ENCODE measurements at regions of chr2 and their contacts with region 1.

Region 1: GRCh38 chr2:207529330-207530159 is at the start of gene CREB1:
- DNase-seq: peak; percentile 99
- ATAC-seq: peak; percentile 89
- H3K4me3 ChIP-seq: peak within 1 kb of the TSS; percentile 83
- H3K27ac ChIP-seq: peak within 1 kb of the TSS; percentile 89
- H3K4me1 ChIP-seq: peaks cover 25% of the 10 kb centered on the region
- H3K27me3 ChIP-seq: no peaks in the 10 kb centered on the region
- CTCF ChIP-seq: no peak
- total RNA-seq, gene CREB1: 34.8 and 43.5 TPM in 2 replicates

Region 2: DNA sequence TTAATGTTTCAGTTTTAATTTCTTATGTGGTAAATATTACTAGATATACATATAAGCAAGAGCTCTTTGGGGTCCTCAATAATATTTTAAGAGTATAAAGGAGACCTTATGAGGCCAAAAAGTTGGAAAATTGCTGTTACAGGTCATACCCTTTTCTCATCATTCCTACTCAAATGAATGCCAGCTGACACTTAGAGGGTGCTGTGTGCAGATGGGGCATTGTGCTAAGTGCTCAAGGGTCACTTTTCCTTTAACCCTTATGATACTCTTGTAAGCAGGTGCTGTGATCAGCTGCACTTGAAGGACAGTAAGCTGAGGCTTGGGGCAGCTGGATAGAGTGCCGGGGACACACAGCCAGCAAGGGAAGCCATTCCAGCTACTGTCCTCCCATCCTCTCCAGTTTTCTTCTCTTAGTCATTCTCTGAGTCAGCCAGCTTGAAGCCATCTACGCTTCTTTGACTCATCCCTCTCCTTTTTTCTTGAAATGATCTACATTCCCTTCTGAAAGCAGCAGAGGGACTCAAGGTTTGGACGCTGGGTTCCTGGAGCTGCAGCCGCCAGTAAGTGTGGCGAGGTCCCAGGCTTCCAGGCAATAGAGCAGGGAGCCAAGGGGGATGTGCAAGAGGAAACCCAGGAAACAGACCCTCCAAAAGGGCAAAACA is 41.8 kb before region 1 on chr2:
- CTCF ChIA-PET with region 1: interaction called, 3 read pairs
- POLR2A ChIA-PET with region 1: interaction called, 3 read pairs
- intact Hi-C with region 1: loop called (anchors 2 kb)
- DNase-seq: peak; percentile 92
- ATAC-seq: peak; percentile 96
- H3K4me3 ChIP-seq: no peak overlapping the region
- H3K27ac ChIP-seq: peak overlapping the region; percentile 50
- H3K4me1 ChIP-seq: peaks cover 26% of the 10 kb centered on the region
- H3K27me3 ChIP-seq: no peaks in the 10 kb centered on the region
- CTCF ChIP-seq: peak; percentile 68

Region 3: DNA sequence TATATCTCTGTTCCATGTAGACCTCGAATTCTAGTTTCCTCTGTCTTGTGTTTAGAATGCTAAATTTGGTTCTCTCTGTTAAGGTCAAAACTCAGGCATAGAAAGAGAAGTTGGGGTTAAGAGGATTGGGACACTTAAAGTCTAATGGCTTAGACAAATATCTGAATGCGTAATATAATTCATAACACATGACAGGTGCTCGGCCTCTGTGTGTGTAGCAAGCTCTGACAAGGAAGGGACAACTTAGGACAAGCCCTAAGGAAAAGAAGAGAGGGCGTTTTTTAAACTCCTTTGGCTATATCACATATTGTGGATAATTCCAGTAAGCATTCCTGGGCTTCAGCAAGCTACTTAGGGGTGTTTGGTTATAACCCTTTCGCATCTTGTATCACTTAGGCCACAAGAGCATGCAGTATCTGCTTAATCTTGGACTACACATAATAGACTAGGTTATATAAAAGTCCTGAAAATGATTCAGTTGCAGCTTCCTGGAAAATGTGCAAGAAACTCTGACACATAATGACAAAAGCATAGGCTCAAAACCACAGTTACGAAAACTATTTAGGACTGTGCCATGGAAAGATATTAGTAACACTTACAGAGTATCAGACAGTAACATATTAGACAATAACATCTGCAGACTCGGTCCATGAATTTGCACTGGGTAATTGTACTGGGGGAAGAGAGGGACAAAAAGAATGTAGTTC is 15.8 kb before region 1 on chr2:
- CTCF ChIA-PET with region 1: no interaction called
- POLR2A ChIA-PET with region 1: interaction called, 3 read pairs
- intact Hi-C with region 1: loop called (anchors 2 kb)
- DNase-seq: peak; percentile 93
- ATAC-seq: peak; percentile 93
- H3K4me3 ChIP-seq: peak overlapping the region; percentile 29; the same call in 1 of the 2 replicates
- H3K27ac ChIP-seq: peak overlapping the region; percentile 85
- H3K4me1 ChIP-seq: peaks cover 36% of the 10 kb centered on the region
- H3K27me3 ChIP-seq: no peaks in the 10 kb centered on the region
- CTCF ChIP-seq: no peak

Region 4: GRCh38 chr2:207571370-207571769 is 41.8 kb after region 1 on chr2:
- CTCF ChIA-PET with region 1: no interaction called
- POLR2A ChIA-PET with region 1: interaction called, 18 read pairs
- intact Hi-C with region 1: no loop called
- DNase-seq: no peak
- ATAC-seq: no peak
- H3K4me3 ChIP-seq: no peak overlapping the region
- H3K27ac ChIP-seq: no peak overlapping the region
- H3K4me1 ChIP-seq: no peaks in the 10 kb centered on the region
- H3K27me3 ChIP-seq: no peaks in the 10 kb centered on the region
- CTCF ChIP-seq: no peak

Region 5: GRCh38 chr2:207683879-207684627 is 154.5 kb after region 1 on chr2:
- CTCF ChIA-PET with region 1: no interaction called
- POLR2A ChIA-PET with region 1: interaction called, 12 read pairs
- intact Hi-C with region 1: no loop called
- DNase-seq: peak; percentile 96
- ATAC-seq: peak; percentile 87
- H3K4me3 ChIP-seq: peak overlapping the region; percentile 9; the same call in 1 of the 2 replicates
- H3K27ac ChIP-seq: peak overlapping the region; percentile 94
- H3K4me1 ChIP-seq: peaks cover 23% of the 10 kb centered on the region
- H3K27me3 ChIP-seq: no peaks in the 10 kb centered on the region
- CTCF ChIP-seq: no peak

Region 6: GRCh38 chr2:207734264-207734635 is 204.7 kb after region 1 on chr2:
- CTCF ChIA-PET with region 1: interaction called, 4 read pairs
- POLR2A ChIA-PET with region 1: no interaction called
- intact Hi-C with region 1: loop called (anchors 5 kb)
- DNase-seq: peak; percentile 70
- ATAC-seq: peak; percentile 95
- H3K4me3 ChIP-seq: no peak overlapping the region
- H3K27ac ChIP-seq: no peak overlapping the region
- H3K4me1 ChIP-seq: no peaks in the 10 kb centered on the region
- H3K27me3 ChIP-seq: no peaks in the 10 kb centered on the region
- CTCF ChIP-seq: peak; percentile 76